Gastrocnemius medialis (tissue), 4 donors: ENCODE measurements at regions of chr20 and their contacts with region 1.

Region 1: GRCh38 chr20:43721429-43722152 is 5.2 kb downstream of the GTSF1L start:
- DNase-seq: no peak
- ATAC-seq: no peak
- H3K4me3 ChIP-seq: no peak overlapping the region
- H3K27ac ChIP-seq: no peak overlapping the region
- H3K4me1 ChIP-seq: no peaks in the 10 kb centered on the region
- H3K27me3 ChIP-seq: no peaks in the 10 kb centered on the region
- CTCF ChIP-seq: no peak
- POLR2A ChIP-seq: no peak

Region 2: GRCh38 chr20:43590392-43591323 is 130.9 kb before region 1 on chr20 and contains the start of gene IFT52:
- in situ Hi-C with region 1: no loop called
- intact Hi-C with region 1: no loop called
- DNase-seq: peak; percentile 84 to 88
- ATAC-seq: peak; percentile 99
- H3K4me3 ChIP-seq: peak within 1 kb of the TSS; percentile 92 to 97 (median 96)
- H3K27ac ChIP-seq: peak within 1 kb of the TSS; percentile 78 to 93 (median 86)
- H3K4me1 ChIP-seq: peaks cover 12 to 16% of the 10 kb centered on the region in 2 donors
- H3K27me3 ChIP-seq: no peaks in the 10 kb centered on the region
- CTCF ChIP-seq: no peak
- POLR2A ChIP-seq: peak in 1 of 2 donors; percentile 6
- total RNA-seq, gene IFT52: 1.7 to 3.4 (median 2.9) TPM

Region 3: GRCh38 chr20:43824309-43825050 is 102.9 kb after region 1 on chr20:
- in situ Hi-C with region 1: loop called in 1 of 4 experiments (anchors 25 kb)
- intact Hi-C with region 1: no loop called
- DNase-seq: no peak
- ATAC-seq: no peak
- H3K4me3 ChIP-seq: no peak overlapping the region
- H3K27ac ChIP-seq: no peak overlapping the region
- H3K4me1 ChIP-seq: no peaks in the 10 kb centered on the region
- H3K27me3 ChIP-seq: no peaks in the 10 kb centered on the region
- CTCF ChIP-seq: no peak
- POLR2A ChIP-seq: no peak